ENCODE measurements at regions of chr6 and their contacts with region 1.

Region 1: GRCh38 chr6:31580807-31581433 is 1.3 kb downstream of the LTB start:
- DNase-seq: peak; percentile 77 to 93 (median 90)
- ATAC-seq: peak; percentile 66
- H3K4me3 ChIP-seq: peak overlapping the region; percentile 97
- H3K4me3 Mint-ChIP-seq: peak overlapping the region; percentile 97
- H3K27ac ChIP-seq: peak overlapping the region; percentile 82 to 95
- H3K27ac Mint-ChIP-seq: peak overlapping the region; percentile 85
- H3K4me1 ChIP-seq: peaks cover 82% of the 10 kb centered on the region
- H3K4me1 Mint-ChIP-seq: peaks cover 84% of the 10 kb centered on the region
- H3K27me3 ChIP-seq: no peaks in the 10 kb centered on the region
- H3K27me3 Mint-ChIP-seq: no peaks in the 10 kb centered on the region
- CTCF ChIP-seq: peak; percentile 98

Region 2: DNA sequence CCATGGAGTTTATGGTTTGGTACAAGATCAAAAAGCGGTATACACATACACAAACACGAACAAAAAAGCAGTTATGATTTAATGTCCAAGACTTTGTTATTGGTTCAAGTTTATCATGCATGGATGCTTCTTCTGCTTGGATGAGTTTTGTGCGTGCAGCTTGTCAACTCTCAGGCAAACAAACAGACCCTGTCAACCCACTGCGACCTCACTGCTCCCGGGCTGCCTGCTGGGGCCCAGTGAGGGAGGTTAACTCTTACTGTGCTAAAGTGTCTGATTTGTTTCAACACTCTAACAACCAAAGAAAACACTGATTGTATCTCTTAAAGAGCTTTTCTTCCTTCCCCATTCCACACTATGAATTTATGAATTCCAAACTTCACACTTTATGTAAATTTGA is 723.4 kb before region 1 on chr6:
- CTCF ChIA-PET with region 1: no interaction called
- POLR2A ChIA-PET with region 1: no interaction called
- intact Hi-C with region 1: no loop called
- DNase-seq: no peak
- ATAC-seq: no peak
- H3K4me3 ChIP-seq: no peak overlapping the region
- H3K4me3 Mint-ChIP-seq: no peak overlapping the region
- H3K27ac ChIP-seq: no peak overlapping the region
- H3K27ac Mint-ChIP-seq: no peak overlapping the region
- H3K4me1 ChIP-seq: no peaks in the 10 kb centered on the region
- H3K4me1 Mint-ChIP-seq: no peaks in the 10 kb centered on the region
- H3K27me3 ChIP-seq: peaks cover 0 to 3% of the 10 kb centered on the region in 2 experiments
- H3K27me3 Mint-ChIP-seq: no peaks in the 10 kb centered on the region
- CTCF ChIP-seq: no peak

Region 3: GRCh38 chr6:31546962-31547726 is 33.8 kb before region 1 on chr6 and contains the start of gene NFKBIL1:
- CTCF ChIA-PET with region 1: interaction called, 169 read pairs
- POLR2A ChIA-PET with region 1: interaction called, 220 read pairs
- intact Hi-C with region 1: loop called (anchors 1 kb)
- DNase-seq: peak; percentile 74 to 95 (median 84)
- ATAC-seq: peak; percentile 78
- H3K4me3 ChIP-seq: peak within 1 kb of the TSS; percentile 62
- H3K4me3 Mint-ChIP-seq: peak within 1 kb of the TSS; percentile 86
- H3K27ac ChIP-seq: peak within 1 kb of the TSS; percentile 72 to 89
- H3K27ac Mint-ChIP-seq: peak within 1 kb of the TSS; percentile 84
- H3K4me1 ChIP-seq: peaks cover 47% of the 10 kb centered on the region
- H3K4me1 Mint-ChIP-seq: peaks cover 41% of the 10 kb centered on the region
- H3K27me3 ChIP-seq: no peaks in the 10 kb centered on the region
- H3K27me3 Mint-ChIP-seq: no peaks in the 10 kb centered on the region
- CTCF ChIP-seq: peak; percentile 21
- total RNA-seq, gene NFKBIL1: 7.6 to 9.3 TPM

Region 4: GRCh38 chr6:31568537-31568961 is 12.4 kb before region 1 on chr6:
- CTCF ChIA-PET with region 1: interaction called, 38 read pairs
- POLR2A ChIA-PET with region 1: interaction called, 1,160 read pairs
- intact Hi-C with region 1: loop called (anchors 1 to 2 kb)
- DNase-seq: peak in 9 of 14 experiments; percentile 31 to 95 (median 61)
- ATAC-seq: peak; percentile 60
- H3K4me3 ChIP-seq: no peak overlapping the region
- H3K4me3 Mint-ChIP-seq: peak overlapping the region; percentile 65
- H3K27ac ChIP-seq: peak overlapping the region; percentile 78 to 88
- H3K27ac Mint-ChIP-seq: peak overlapping the region; percentile 95
- H3K4me1 ChIP-seq: peaks cover 83% of the 10 kb centered on the region
- H3K4me1 Mint-ChIP-seq: peaks cover 81% of the 10 kb centered on the region
- H3K27me3 ChIP-seq: no peaks in the 10 kb centered on the region
- H3K27me3 Mint-ChIP-seq: no peaks in the 10 kb centered on the region
- CTCF ChIP-seq: no peak

Region 5: GRCh38 chr6:31619805-31620585 is 39.1 kb after region 1 on chr6:
- CTCF ChIA-PET with region 1: no interaction called
- POLR2A ChIA-PET with region 1: interaction called, 15 read pairs
- intact Hi-C with region 1: no loop called
- DNase-seq: peak; percentile 86 to 99 (median 95)
- ATAC-seq: peak; percentile 79
- H3K4me3 ChIP-seq: peak overlapping the region; percentile 74
- H3K4me3 Mint-ChIP-seq: peak overlapping the region; percentile 92
- H3K27ac ChIP-seq: peak overlapping the region; percentile 97 to 99
- H3K27ac Mint-ChIP-seq: peak overlapping the region; percentile 92
- H3K4me1 ChIP-seq: peaks cover 46% of the 10 kb centered on the region
- H3K4me1 Mint-ChIP-seq: peaks cover 52% of the 10 kb centered on the region
- H3K27me3 ChIP-seq: no peaks in the 10 kb centered on the region
- H3K27me3 Mint-ChIP-seq: no peaks in the 10 kb centered on the region
- CTCF ChIP-seq: no peak

Region 6: GRCh38 chr6:31834434-31835198 is 253.7 kb after region 1 on chr6:
- CTCF ChIA-PET with region 1: interaction called, 4 read pairs
- POLR2A ChIA-PET with region 1: interaction called, 3 read pairs
- intact Hi-C with region 1: loop called in 1 of 2 experiments (anchors 10 kb)
- DNase-seq: peak; percentile 72 to 89 (median 78)
- ATAC-seq: peak; percentile 71
- H3K4me3 ChIP-seq: peak overlapping the region; percentile 94
- H3K4me3 Mint-ChIP-seq: peak overlapping the region; percentile 96
- H3K27ac ChIP-seq: peak overlapping the region; percentile 97 to 98
- H3K27ac Mint-ChIP-seq: peak overlapping the region; percentile 98
- H3K4me1 ChIP-seq: peaks cover 66% of the 10 kb centered on the region
- H3K4me1 Mint-ChIP-seq: peaks cover 60% of the 10 kb centered on the region
- H3K27me3 ChIP-seq: no peaks in the 10 kb centered on the region
- H3K27me3 Mint-ChIP-seq: no peaks in the 10 kb centered on the region
- CTCF ChIP-seq: no peak

Region 7: GRCh38 chr6:32796848-32797776 is 1216.2 kb after region 1 on chr6:
- CTCF ChIA-PET with region 1: no interaction called
- POLR2A ChIA-PET with region 1: no interaction called
- intact Hi-C with region 1: no loop called
- DNase-seq: peak; percentile 57 to 88 (median 76)
- ATAC-seq: peak; percentile 73
- H3K4me3 ChIP-seq: peak overlapping the region; percentile 14
- H3K4me3 Mint-ChIP-seq: peak overlapping the region; percentile 40
- H3K27ac ChIP-seq: no peak overlapping the region
- H3K27ac Mint-ChIP-seq: no peak overlapping the region
- H3K4me1 ChIP-seq: peaks cover 9% of the 10 kb centered on the region
- H3K4me1 Mint-ChIP-seq: peaks cover 26% of the 10 kb centered on the region
- H3K27me3 ChIP-seq: peaks cover 14 to 21% of the 10 kb centered on the region in 2 experiments
- H3K27me3 Mint-ChIP-seq: peaks cover 65% of the 10 kb centered on the region
- CTCF ChIP-seq: peak; percentile 97

Measured in CD4-positive, alpha-beta T cell (primary cell).